ENCODE measurements at regions of chr19 and their contacts with region 1.

Region 1: DNA sequence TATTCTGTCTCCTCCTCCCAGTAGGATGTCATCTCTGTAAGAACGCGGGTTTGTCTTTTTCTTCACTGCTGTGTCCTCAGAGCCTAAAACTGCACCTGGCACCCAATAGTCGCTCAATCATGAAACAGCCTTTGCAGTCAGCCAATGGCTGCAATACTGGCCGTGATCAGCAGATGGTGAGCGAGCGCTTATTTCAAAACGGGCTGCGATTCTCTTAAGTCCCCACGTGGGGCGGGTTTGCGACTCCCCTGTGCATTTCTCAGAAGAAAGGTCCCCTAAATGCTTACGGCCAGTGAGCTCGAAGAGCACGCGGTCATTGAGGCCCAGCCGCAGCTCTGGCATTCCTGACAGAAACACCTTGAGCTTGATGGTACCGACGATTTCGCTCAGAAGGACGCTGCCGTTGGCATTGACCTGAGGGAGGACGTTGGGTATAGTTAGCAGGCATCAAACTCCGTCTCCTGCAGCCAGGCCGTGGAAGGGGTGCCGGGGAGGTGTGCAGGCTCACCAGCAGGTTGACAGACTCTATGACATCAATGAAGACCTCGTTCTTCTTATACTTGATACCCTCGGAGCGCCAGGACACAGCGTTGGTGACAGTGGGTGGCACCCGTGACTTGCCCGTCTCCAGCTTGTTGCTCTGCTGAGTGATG is 6.0 kb downstream of the AP1M2 start:
- DNase-seq: peak; percentile 87
- CTCF ChIP-seq: peak; percentile 98

Region 2: DNA sequence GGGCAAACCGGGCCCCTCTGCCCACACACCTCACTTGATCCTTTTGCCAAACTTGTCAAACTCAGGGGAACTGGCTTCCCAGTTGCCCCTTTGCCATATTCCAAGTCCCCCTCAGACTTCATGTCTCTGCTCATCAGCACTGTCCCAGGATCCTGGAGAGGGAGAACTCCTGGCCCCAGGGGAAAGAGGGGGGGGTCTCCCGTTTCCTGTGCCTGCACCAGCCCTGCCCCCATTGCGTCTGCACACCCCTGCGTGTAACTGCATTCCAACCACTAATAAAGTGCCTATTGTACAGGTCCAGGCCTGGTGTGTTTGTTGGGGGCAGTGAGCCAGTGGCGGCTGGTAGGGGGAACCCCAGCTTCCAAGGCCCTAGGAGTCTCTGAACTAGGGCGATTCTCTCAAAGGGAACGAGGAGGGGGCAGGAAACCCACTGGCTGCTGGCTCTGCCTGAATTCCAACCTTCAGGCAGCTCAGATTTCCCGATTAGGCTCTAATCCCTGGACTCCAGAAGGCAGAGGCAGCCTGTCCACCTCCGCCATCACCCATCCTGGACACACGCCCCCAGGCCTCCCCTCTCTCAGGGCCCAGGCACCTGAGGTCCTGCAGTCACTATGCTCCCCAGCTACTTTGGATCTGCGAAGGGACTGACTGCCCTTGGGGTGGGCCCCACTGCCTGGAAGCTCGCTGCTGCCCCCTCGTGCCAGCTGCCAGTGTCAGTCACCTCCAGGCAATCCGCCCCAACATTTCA is 63.3 kb after region 1 on chr19:
- in situ Hi-C with region 1: loop called (anchors 5 kb)
- DNase-seq: peak; percentile 91
- CTCF ChIP-seq: peak; percentile 91

Region 3: GRCh38 chr19:10695401-10696398 is 114.6 kb after region 1 on chr19:
- in situ Hi-C with region 1: loop called (anchors 5 kb)
- DNase-seq: peak; percentile 98
- CTCF ChIP-seq: no peak

Measured in GM13976 (cell line).